ENCODE measurements at regions of chr3 and their contacts with region 1.

Region 1: DNA sequence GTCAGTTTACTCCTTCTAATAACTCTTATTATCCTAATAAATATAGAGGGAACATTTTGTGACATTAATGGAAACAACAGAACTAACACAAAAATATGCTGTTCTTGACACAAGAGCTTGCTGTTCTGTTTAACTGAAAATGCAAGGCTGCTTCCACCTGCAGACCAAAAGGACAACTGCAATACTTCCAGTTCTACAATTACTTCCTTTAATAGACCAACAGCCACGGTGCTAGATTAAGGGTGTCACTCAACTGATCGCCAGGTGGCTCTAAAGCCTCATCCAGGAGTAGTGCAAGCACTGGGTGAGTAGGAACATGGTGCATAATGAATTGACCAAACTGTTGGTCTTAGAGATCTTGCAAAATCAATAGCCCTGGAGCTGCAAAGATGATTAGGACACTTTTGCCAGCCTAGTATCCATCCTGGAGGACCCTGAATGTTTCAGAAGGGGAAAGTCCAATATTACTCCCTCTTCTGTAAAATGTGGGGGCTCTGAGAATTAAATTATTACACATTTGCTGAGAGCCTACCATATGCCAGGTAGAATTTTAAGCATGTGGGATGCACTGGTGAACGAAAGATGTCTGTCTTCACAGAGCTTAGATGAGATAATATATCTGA is 3.6 kb upstream of the CLDN16 start:
- DNase-seq: peak; percentile 64 to 67
- H3K4me3 ChIP-seq: no peak overlapping the region
- H3K27ac ChIP-seq: peak overlapping the region; percentile 96
- H3K4me1 ChIP-seq: peaks cover 52% of the 10 kb centered on the region
- H3K27me3 ChIP-seq: no peaks in the 10 kb centered on the region
- CTCF ChIP-seq: peak; percentile 49; the same call in 1 of the 2 replicates

Region 2: GRCh38 chr3:189961525-189962161 is 422.7 kb before region 1 on chr3:
- CTCF ChIA-PET with region 1: interaction called, 3 read pairs
- POLR2A ChIA-PET with region 1: no interaction called
- intact Hi-C with region 1: loop called (anchors 1 kb)
- DNase-seq: peak; percentile 79 to 85
- H3K4me3 ChIP-seq: no peak overlapping the region
- H3K27ac ChIP-seq: no peak overlapping the region
- H3K4me1 ChIP-seq: peaks cover 7% of the 10 kb centered on the region
- H3K27me3 ChIP-seq: no peaks in the 10 kb centered on the region
- CTCF ChIP-seq: peak; percentile 100

Region 3: GRCh38 chr3:190017521-190018288 is 366.6 kb before region 1 on chr3:
- CTCF ChIA-PET with region 1: no interaction called
- POLR2A ChIA-PET with region 1: no interaction called
- intact Hi-C with region 1: loop called (anchors 10 kb)
- DNase-seq: peak; percentile 55 to 65
- H3K4me3 ChIP-seq: no peak overlapping the region
- H3K27ac ChIP-seq: no peak overlapping the region
- H3K4me1 ChIP-seq: peaks cover 24% of the 10 kb centered on the region
- H3K27me3 ChIP-seq: no peaks in the 10 kb centered on the region
- CTCF ChIP-seq: peak; percentile 49; the same call in 1 of the 2 replicates

Region 4: GRCh38 chr3:190224863-190225692 is 159.3 kb before region 1 on chr3:
- CTCF ChIA-PET with region 1: interaction called, 15 read pairs
- POLR2A ChIA-PET with region 1: no interaction called
- intact Hi-C with region 1: loop called (anchors 1 kb)
- DNase-seq: peak in 1 of 2 experiments; percentile 12
- H3K4me3 ChIP-seq: no peak overlapping the region
- H3K27ac ChIP-seq: no peak overlapping the region
- H3K4me1 ChIP-seq: peaks cover 12% of the 10 kb centered on the region
- H3K27me3 ChIP-seq: no peaks in the 10 kb centered on the region
- CTCF ChIP-seq: peak; percentile 74

Region 5: GRCh38 chr3:190345027-190345821 is 39.1 kb before region 1 on chr3:
- CTCF ChIA-PET with region 1: interaction called, 5 read pairs
- POLR2A ChIA-PET with region 1: interaction called, 6 read pairs
- intact Hi-C with region 1: loop called (anchors 1 kb)
- DNase-seq: peak; percentile 79 to 100
- H3K4me3 ChIP-seq: peak overlapping the region; percentile 50; the same call in 1 of the 2 replicates
- H3K27ac ChIP-seq: peak overlapping the region; percentile 98
- H3K4me1 ChIP-seq: peaks cover 40% of the 10 kb centered on the region
- H3K27me3 ChIP-seq: no peaks in the 10 kb centered on the region
- CTCF ChIP-seq: no peak

Region 6: GRCh38 chr3:190424478-190425439 is 40.4 kb after region 1 on chr3:
- CTCF ChIA-PET with region 1: interaction called, 10 read pairs
- POLR2A ChIA-PET with region 1: interaction called, 5 read pairs
- intact Hi-C with region 1: loop called (anchors 1 kb)
- DNase-seq: peak; percentile 70 to 73
- H3K4me3 ChIP-seq: no peak overlapping the region
- H3K27ac ChIP-seq: no peak overlapping the region
- H3K4me1 ChIP-seq: no peaks in the 10 kb centered on the region
- H3K27me3 ChIP-seq: no peaks in the 10 kb centered on the region
- CTCF ChIP-seq: peak; percentile 95

Region 7: DNA sequence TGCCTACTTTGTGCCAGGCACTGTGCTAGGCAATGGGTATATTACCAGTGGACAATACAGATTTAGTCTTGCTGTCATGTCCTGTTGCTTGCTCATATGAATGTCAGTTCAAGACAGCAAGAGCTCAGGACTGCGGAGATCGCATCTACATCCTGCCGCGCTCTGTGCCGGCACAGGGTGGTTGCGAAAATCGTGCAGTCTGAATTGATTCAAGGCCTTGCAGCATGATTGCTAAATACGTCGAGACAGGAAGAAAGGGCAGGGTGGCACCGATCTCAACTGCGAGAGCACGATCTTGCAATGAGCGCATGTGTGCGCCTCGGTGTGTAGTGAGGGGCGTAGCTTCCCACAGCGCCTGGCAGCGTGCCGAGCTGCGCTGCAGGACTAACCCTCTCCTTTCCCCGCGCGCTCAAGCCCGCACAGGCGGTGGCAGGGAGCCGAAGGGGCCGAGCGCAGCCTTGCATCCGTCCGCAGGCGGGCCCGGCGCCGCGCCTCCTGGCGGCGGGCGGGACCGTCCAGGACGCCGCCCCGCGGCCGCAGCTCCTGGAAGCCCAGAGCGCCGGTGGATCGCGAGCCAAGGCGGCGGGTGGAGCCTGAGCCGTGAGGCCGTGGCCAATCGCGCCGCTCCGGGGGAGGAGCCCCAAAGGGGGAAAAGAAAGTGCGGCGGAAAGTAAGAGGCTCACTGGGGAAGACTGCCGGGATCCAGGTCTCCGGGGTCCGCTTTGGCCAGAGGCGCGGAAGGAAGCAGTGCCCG is 129.2 kb after region 1 on chr3 and contains the start of gene IL1RAP:
- CTCF ChIA-PET with region 1: no interaction called
- POLR2A ChIA-PET with region 1: no interaction called
- intact Hi-C with region 1: loop called (anchors 2 kb)
- DNase-seq: peak; percentile 88 to 96
- H3K4me3 ChIP-seq: peak within 1 kb of the TSS; percentile 80
- H3K27ac ChIP-seq: peak within 1 kb of the TSS; percentile 41
- H3K4me1 ChIP-seq: peaks cover 27% of the 10 kb centered on the region
- H3K27me3 ChIP-seq: no peaks in the 10 kb centered on the region
- CTCF ChIP-seq: no peak; the same call in none of the 2 replicates
- total RNA-seq, gene IL1RAP: 8.4 and 13.3 TPM in 2 replicates

Measured in PC-9 (cell line).